Cardiac septum (tissue), 1 donor: ENCODE measurements at regions of chr14 and their contacts with region 1.

Region 1: GRCh38 chr14:89303457-89304435 is 113.3 kb downstream of the FOXN3 start:
- DNase-seq: peak; percentile 85

Region 2: GRCh38 chr14:89085737-89086382 is 217.9 kb before region 1 on chr14:
- intact Hi-C with region 1: no loop called
- DNase-seq: no peak

Region 3: DNA sequence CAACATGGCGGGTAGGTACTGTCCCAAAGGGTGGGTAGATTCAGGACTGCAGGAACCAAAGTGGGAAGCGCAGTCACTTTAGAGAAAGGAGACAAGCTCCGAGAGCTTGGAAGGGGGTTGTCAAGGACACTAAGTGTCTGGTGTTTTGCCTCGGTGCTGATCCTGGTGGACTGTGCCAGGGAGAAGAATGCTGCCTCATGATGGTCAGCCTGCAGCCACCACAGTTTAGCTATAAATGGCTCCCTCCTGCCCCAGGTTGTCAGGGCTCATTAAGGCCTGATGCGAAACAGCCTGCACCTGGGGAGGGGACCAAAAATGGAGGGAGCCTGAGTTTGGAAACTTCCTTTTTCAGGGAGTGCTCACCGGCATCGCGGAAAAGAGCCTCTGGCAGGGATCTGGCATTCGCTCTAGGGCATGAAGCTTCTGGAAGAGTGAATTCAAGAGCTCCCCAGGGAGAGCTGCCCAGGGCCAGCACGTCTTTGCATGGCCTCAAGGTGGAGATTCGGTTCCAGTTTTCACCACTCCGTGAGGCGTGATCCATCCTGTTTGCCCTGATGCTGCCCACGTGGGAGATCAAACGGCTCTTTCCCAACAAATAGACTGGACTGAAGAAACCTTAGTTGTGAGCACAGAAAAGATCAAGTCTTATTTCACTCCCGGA is 50.7 kb before region 1 on chr14:
- intact Hi-C with region 1: loop called (anchors 5 kb)
- DNase-seq: no peak